Mammary epithelial cell (primary cell): ENCODE measurements at regions of chr6 and their contacts with region 1.

Region 1: DNA sequence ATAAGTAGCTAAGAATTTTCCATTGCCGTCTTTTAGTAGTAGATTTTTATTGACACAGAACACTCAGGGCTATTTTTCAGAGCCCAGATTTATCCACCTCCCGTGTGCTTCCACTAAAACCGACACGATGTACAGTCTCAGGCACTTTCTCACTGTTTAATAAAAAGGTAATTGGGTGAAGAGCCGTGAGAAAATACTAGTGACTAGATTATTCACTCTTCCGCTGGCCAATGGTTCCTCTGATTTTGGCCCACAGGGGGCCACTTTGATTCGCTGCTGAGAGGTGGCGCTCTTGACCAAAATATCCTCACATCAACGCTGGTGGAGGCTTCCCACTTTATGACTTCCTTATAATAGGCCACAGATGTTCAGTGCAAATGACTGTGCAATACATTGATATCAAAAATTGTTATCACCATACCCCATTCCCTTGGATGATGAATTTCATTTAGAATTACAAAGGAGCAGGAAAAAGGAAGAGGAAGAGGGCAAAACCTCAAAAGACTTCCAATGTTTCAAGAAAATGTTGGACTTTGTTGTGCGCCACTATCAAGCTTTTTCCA is 12.3 kb upstream of the HDDC2 start:
- DNase-seq: peak; percentile 47
- H3K4me3 ChIP-seq: no peak overlapping the region
- H3K27ac ChIP-seq: no peak overlapping the region
- H3K4me1 ChIP-seq: no peaks in the 10 kb centered on the region
- H3K27me3 ChIP-seq: no peaks in the 10 kb centered on the region
- CTCF ChIP-seq: peak; percentile 71 to 88

Region 2: GRCh38 chr6:124870611-124871459 is 443.3 kb before region 1 on chr6:
- CTCF ChIA-PET with region 1: no interaction called
- dilution Hi-C with region 1: no loop called
- in situ Hi-C with region 1: no loop called
- intact Hi-C with region 1: loop called (anchors 1 kb)
- DNase-seq: peak; percentile 12
- H3K4me3 ChIP-seq: no peak overlapping the region
- H3K27ac ChIP-seq: no peak overlapping the region
- H3K4me1 ChIP-seq: peaks cover 5% of the 10 kb centered on the region
- H3K27me3 ChIP-seq: no peaks in the 10 kb centered on the region
- CTCF ChIP-seq: peak; percentile 54 to 63

Region 3: GRCh38 chr6:125013938-125014660 is 300.0 kb before region 1 on chr6:
- CTCF ChIA-PET with region 1: no interaction called
- dilution Hi-C with region 1: no loop called
- in situ Hi-C with region 1: no loop called
- intact Hi-C with region 1: no loop called
- DNase-seq: peak; percentile 46
- H3K4me3 ChIP-seq: no peak overlapping the region
- H3K27ac ChIP-seq: peak overlapping the region; percentile 60
- H3K4me1 ChIP-seq: peaks cover 22% of the 10 kb centered on the region
- H3K27me3 ChIP-seq: no peaks in the 10 kb centered on the region
- CTCF ChIP-seq: no peak

Region 4: DNA sequence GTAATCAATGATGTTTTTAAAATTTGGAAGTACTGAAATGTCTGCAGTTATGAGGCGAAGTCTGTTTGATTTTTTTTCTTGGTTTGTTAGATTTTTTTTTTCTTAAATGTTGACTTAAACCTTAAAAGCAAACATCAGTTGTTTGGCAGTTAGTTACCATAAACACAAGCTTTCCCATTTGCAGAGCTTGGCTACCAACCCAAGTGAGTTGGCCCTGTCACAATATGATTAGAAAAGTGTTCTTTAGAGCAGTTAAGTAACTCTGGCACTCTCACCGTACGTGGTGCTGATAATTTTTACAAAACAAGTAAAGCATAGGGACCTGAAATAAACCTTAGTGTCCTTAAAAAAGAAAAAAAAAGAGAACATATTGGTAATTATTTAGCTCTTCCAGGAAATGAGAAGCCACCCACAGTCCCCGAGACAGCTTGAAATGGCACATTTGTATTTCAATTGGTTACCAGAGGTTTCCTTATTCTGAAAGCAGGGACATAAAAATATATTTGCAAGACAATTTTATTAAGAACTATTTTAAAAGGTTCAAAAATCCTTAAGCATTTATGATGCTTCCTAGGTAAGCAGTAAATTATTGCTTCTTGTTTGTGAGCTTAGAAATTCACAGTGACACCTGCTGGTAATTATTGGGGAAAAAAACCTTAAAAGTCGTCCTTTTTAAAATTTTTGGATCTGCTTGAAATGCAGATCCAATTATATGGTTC is 439.3 kb after region 1 on chr6:
- CTCF ChIA-PET with region 1: no interaction called
- dilution Hi-C with region 1: no loop called
- in situ Hi-C with region 1: no loop called
- intact Hi-C with region 1: loop called (anchors 1 kb)
- DNase-seq: no peak
- H3K4me3 ChIP-seq: no peak overlapping the region
- H3K27ac ChIP-seq: no peak overlapping the region
- H3K4me1 ChIP-seq: peaks cover 14% of the 10 kb centered on the region
- H3K27me3 ChIP-seq: peaks cover 21% of the 10 kb centered on the region
- CTCF ChIP-seq: peak; percentile 23 to 49

Region 5: DNA sequence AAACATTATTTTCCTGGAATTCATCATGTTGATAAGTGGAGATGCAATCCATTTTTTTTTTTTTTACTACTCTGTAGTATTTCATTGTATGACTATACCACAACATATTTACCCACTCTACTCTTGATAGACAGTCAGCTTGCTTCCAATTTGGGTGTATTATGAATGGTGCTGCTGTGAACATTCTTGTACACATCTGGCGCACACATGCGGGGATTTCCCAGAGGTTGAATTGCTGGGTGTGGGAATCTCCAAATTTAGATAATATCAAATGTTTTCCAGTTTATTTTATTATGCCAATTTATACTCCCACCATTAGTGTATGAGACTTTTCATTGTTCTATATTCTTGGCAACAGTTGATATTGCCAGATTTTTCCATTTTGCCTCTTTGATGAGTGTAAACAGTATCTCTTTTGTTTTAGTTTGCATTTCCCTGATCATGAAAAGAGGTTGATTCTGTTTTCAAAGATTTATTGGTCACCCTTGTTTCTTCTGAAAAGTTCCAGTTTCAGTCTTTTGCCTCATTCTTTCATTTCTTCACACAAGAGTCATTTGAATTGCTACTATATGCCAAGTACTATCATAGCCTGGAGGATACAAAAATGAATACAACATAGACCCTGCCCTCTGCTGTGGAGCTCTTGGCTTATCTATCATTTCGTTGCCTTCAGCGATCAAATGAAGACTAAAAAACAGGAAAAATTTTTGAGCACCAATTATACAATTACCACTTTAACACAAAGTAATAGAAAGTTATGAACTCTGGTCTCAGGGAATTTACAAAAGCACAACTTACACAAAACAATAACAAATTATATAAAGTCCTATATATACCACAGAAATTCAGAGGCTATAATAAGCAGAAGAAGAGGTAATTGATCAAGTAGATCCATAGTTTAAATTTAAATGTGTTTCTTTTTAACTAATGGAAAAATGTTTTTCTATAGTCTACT is 459.6 kb after region 1 on chr6:
- CTCF ChIA-PET with region 1: no interaction called
- dilution Hi-C with region 1: loop called (anchors 5 kb)
- in situ Hi-C with region 1: loop called (anchors 5 kb)
- intact Hi-C with region 1: loop called (anchors 1 kb)
- DNase-seq: peak; percentile 74
- H3K4me3 ChIP-seq: no peak overlapping the region
- H3K27ac ChIP-seq: no peak overlapping the region
- H3K4me1 ChIP-seq: no peaks in the 10 kb centered on the region
- H3K27me3 ChIP-seq: peaks cover 6% of the 10 kb centered on the region
- CTCF ChIP-seq: no peak

Region 6: DNA sequence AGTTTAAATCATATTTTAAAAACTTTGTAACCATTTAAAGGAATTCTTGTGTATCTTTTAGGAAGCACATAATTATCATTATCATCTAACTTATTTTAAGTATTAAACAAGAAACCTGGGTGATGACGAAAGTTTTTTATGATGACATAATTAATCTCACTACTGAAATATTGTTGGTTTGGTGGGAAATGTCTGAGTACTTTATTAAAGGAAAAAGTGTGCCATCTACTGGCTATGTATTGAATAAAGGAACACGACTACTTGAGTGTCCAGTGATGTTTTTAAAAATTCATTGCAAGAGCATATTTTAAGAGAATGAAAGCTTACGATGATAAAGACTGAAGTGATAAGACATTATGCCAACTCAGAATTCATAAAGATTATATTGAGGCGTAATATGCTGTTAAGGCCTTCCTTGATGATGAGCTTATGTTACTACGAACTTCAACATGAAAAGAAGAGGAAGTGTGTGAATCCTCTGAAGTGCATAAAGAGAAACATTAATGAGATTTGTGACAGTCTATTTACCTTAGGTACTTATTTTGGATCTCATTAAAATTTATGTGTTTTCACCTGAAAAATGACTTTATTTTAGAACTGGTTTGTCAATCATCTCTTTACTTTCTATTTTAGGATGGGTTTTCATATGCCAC is 660.2 kb after region 1 on chr6:
- CTCF ChIA-PET with region 1: no interaction called
- dilution Hi-C with region 1: no loop called
- in situ Hi-C with region 1: loop called (anchors 10 to 25 kb)
- intact Hi-C with region 1: loop called (anchors 1 kb)
- DNase-seq: peak; percentile 37
- H3K4me3 ChIP-seq: no peak overlapping the region
- H3K27ac ChIP-seq: no peak overlapping the region
- H3K4me1 ChIP-seq: no peaks in the 10 kb centered on the region
- H3K27me3 ChIP-seq: no peaks in the 10 kb centered on the region
- CTCF ChIP-seq: peak; percentile 30 to 48